Activated CD4-positive, alpha-beta T cell treated with anti-CD3 and anti-CD28 coated beads, Interleukin-2, amount 10 ng/mL, durations not matched to agents 7 days and 5 days (primary cell): ENCODE measurements at regions of chr1 and their contacts with region 1.

Region 1: DNA sequence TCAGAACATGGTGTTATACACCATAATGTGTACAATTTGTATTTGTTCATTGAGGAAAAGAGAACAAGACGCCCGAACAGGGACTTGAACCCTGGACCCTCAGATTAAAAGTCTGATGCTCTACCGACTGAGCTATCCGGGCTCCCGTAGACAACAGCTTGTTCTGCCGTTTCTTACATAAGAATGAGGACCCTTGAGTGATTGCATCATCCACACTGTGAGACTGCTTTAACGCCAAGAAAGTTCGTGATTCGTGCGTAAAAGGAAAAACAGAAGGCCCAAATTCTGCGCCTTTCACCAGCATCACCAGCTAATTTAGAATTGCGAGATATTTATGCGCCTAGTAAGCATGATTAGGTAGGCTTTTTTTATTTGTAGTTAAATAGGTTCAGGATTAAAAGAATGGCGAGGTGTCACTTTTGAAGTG is 9.2 kb upstream of the MDM4 start:
- DNase-seq: peak; percentile 91
- H3K4me3 Mint-ChIP-seq: peak overlapping the region; percentile 87
- H3K27ac Mint-ChIP-seq: peak overlapping the region; percentile 98
- H3K4me1 Mint-ChIP-seq: peaks cover 45% of the 10 kb centered on the region
- H3K27me3 Mint-ChIP-seq: peaks cover 2% of the 10 kb centered on the region

Region 2: GRCh38 chr1:204411451-204412204 is 95.3 kb before region 1 on chr1 and contains the start of gene PPP1R15B:
- CTCF ChIA-PET with region 1: interaction called, 4 read pairs
- POLR2A ChIA-PET with region 1: interaction called, 11 read pairs
- DNase-seq: peak; percentile 97
- H3K4me3 Mint-ChIP-seq: peak within 1 kb of the TSS; percentile 99
- H3K27ac Mint-ChIP-seq: peak within 1 kb of the TSS; percentile 99
- H3K4me1 Mint-ChIP-seq: peaks cover 16% of the 10 kb centered on the region
- H3K27me3 Mint-ChIP-seq: no peaks in the 10 kb centered on the region
- total RNA-seq, gene PPP1R15B: 62.5 to 70.6 TPM

Region 3: GRCh38 chr1:204431310-204432165 is 75.4 kb before region 1 on chr1:
- CTCF ChIA-PET with region 1: interaction called, 57 read pairs
- POLR2A ChIA-PET with region 1: no interaction called
- DNase-seq: peak; percentile 83
- H3K4me3 Mint-ChIP-seq: no peak overlapping the region
- H3K27ac Mint-ChIP-seq: no peak overlapping the region
- H3K4me1 Mint-ChIP-seq: no peaks in the 10 kb centered on the region
- H3K27me3 Mint-ChIP-seq: no peaks in the 10 kb centered on the region

Region 4: DNA sequence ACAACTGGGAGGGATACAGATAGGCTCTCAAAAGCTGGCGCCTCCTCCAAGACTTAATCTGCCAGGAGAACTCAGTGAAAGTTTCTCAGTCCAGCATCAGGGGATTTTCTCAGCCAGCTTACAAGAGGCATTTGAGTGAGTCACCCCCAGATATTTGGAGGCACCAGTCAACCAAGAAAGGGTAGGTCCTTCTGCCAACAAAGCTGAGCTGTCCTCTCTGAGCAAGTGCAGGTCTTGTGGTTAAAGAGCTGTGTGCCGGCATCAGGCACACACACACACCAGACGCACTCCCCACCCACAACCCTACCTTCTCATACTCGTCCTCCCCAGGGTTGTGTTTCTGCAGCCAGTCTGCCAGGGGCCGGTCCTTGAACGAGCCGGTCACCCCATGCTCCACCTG is 68.3 kb before region 1 on chr1:
- CTCF ChIA-PET with region 1: interaction called, 106 read pairs
- POLR2A ChIA-PET with region 1: no interaction called
- DNase-seq: no peak
- H3K4me3 Mint-ChIP-seq: no peak overlapping the region
- H3K27ac Mint-ChIP-seq: no peak overlapping the region
- H3K4me1 Mint-ChIP-seq: peaks cover 2% of the 10 kb centered on the region
- H3K27me3 Mint-ChIP-seq: no peaks in the 10 kb centered on the region

Region 5: GRCh38 chr1:204494281-204495077 is 12.5 kb before region 1 on chr1 and contains the start of gene PIK3C2B:
- CTCF ChIA-PET with region 1: interaction called, 53 read pairs
- POLR2A ChIA-PET with region 1: no interaction called
- DNase-seq: peak; percentile 76
- H3K4me3 Mint-ChIP-seq: peak within 1 kb of the TSS; percentile 88
- H3K27ac Mint-ChIP-seq: peak within 1 kb of the TSS; percentile 89
- H3K4me1 Mint-ChIP-seq: peaks cover 65% of the 10 kb centered on the region
- H3K27me3 Mint-ChIP-seq: no peaks in the 10 kb centered on the region
- total RNA-seq, gene PIK3C2B: 27.4 to 28.9 TPM

Region 6: DNA sequence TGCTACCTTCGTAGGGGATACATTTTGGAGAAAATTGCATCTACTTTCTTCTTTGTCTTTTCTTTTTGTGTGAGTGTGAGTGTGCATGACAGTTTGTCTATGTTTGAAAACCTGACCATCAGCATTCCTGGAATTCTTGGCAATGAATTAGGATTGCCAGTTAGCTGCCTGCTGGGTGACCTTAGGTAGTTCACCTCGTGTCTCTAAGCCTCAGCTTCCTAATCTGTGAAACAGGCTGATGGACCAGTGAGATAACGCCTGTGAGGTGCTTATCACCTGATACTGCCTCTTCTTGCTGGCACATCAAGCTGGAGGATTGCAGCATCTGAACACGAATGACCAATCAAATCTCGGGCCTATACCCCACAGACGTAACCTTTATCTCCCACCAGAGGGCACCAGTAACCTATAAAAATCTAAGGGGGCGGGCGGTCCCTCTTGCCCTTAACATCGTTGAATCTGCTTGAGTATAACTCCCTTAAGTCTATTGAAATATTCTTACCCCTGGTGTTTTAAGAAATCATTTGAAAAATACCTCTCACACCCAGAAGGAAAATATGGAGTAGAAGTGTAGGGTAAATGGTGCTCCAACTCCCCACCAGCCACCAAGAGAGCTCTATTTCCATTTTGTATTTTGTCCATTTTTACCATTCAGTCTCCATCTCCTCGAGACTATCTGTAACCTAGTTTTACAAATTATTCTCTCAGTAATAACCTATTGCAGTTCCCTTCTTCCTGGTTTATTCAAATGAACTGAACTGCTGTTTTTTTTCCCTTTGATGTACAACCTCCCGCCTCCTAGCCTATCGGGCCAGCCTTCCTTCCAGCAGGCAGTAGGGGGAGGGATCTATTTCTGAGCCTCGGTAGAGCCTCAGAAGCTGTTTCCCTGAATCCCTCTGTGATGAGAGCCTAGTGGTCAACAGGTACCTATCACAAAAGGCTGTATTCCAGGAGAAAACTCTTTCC is 58.9 kb after region 1 on chr1:
- CTCF ChIA-PET with region 1: interaction called, 13 read pairs
- POLR2A ChIA-PET with region 1: no interaction called
- DNase-seq: peak; percentile 75
- H3K4me3 Mint-ChIP-seq: no peak overlapping the region
- H3K27ac Mint-ChIP-seq: peak overlapping the region; percentile 63
- H3K4me1 Mint-ChIP-seq: peaks cover 68% of the 10 kb centered on the region
- H3K27me3 Mint-ChIP-seq: no peaks in the 10 kb centered on the region